ENCODE measurements at regions of chr1 and their contacts with region 1.

Region 1: GRCh38 chr1:226679853-226680516 is 59.1 kb downstream of the ITPKB start:
- DNase-seq: peak; percentile 89
- ATAC-seq: peak; percentile 20
- H3K4me3 Mint-ChIP-seq: peak overlapping the region; percentile 67
- H3K27ac Mint-ChIP-seq: peak overlapping the region; percentile 95
- H3K4me1 Mint-ChIP-seq: peaks cover 99% of the 10 kb centered on the region
- H3K27me3 Mint-ChIP-seq: no peaks in the 10 kb centered on the region

Region 2: GRCh38 chr1:226642876-226643576 is 37.0 kb before region 1 on chr1:
- CTCF ChIA-PET with region 1: interaction called, 6 read pairs
- POLR2A ChIA-PET with region 1: no interaction called
- intact Hi-C with region 1: loop called in 1 of 2 experiments (anchors 5 kb)
- DNase-seq: peak; percentile 88
- ATAC-seq: peak; percentile 94
- H3K4me3 Mint-ChIP-seq: peak overlapping the region; percentile 50
- H3K27ac Mint-ChIP-seq: peak overlapping the region; percentile 86
- H3K4me1 Mint-ChIP-seq: peaks cover 51% of the 10 kb centered on the region
- H3K27me3 Mint-ChIP-seq: no peaks in the 10 kb centered on the region

Region 3: GRCh38 chr1:226649780-226650179 is 30.2 kb before region 1 on chr1:
- CTCF ChIA-PET with region 1: interaction called, 5 read pairs
- POLR2A ChIA-PET with region 1: interaction called, 10 read pairs
- intact Hi-C with region 1: loop called (anchors 5 kb)
- DNase-seq: peak; percentile 67
- ATAC-seq: no peak
- H3K4me3 Mint-ChIP-seq: no peak overlapping the region
- H3K27ac Mint-ChIP-seq: peak overlapping the region; percentile 52
- H3K4me1 Mint-ChIP-seq: peaks cover 48% of the 10 kb centered on the region
- H3K27me3 Mint-ChIP-seq: no peaks in the 10 kb centered on the region

Region 4: GRCh38 chr1:226697151-226697939 is 17.4 kb after region 1 on chr1:
- CTCF ChIA-PET with region 1: interaction called, 14 read pairs
- POLR2A ChIA-PET with region 1: interaction called, 7 read pairs
- intact Hi-C with region 1: no loop called
- DNase-seq: no peak
- ATAC-seq: peak; percentile 77
- H3K4me3 Mint-ChIP-seq: no peak overlapping the region
- H3K27ac Mint-ChIP-seq: peak overlapping the region; percentile 97
- H3K4me1 Mint-ChIP-seq: peaks cover 90% of the 10 kb centered on the region
- H3K27me3 Mint-ChIP-seq: no peaks in the 10 kb centered on the region

Region 5: DNA sequence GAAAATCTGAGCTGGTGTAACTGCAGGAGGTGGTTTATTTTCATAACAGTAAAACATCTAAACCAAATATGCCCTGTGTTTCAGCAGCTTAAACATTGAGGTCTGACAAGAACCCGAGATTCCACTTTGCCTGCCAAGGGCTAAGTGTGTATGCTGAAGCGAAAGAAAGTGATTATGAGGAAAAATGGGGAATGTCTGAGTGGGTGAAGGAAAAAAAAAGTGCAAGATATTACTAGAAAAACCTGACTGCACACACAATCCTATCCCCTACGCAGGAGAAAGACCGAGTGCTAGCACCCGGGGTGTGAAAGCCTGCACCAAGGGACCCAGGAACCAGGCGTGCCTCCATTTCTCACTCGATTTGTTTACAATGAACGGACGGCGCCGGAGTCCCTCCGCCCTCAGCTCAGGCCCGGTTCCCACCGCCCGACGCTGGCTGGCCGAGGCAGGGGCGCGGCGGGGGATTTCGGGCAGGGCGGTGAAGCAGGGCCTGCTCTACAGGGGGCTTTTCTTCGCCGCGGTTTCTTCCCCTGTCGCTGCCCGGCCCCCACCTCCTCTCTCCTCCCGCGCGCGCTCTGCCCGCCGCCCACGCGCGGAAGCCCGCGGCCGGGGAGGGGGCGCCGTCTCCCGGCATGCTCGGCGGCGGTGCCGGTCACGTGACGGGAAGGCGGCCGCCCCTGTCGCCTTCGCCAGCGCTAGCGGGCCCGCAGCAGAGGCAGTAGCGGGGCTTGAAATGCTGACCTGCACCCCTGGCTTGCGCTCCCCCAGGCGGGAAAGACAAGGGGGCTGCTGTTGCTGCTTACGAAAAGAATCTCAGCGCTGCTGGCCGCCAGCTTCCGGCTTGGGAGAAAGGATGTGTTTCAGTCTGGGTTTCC is 23.2 kb after region 1 on chr1:
- CTCF ChIA-PET with region 1: interaction called, 14 read pairs
- POLR2A ChIA-PET with region 1: interaction called, 7 read pairs
- intact Hi-C with region 1: loop called in 1 of 2 experiments (anchors 1 kb)
- DNase-seq: peak; percentile 90
- ATAC-seq: peak; percentile 61
- H3K4me3 Mint-ChIP-seq: peak overlapping the region; percentile 84
- H3K27ac Mint-ChIP-seq: peak overlapping the region; percentile 97
- H3K4me1 Mint-ChIP-seq: peaks cover 85% of the 10 kb centered on the region
- H3K27me3 Mint-ChIP-seq: no peaks in the 10 kb centered on the region

Region 6: GRCh38 chr1:226882631-226883409 is 202.8 kb after region 1 on chr1:
- CTCF ChIA-PET with region 1: no interaction called
- POLR2A ChIA-PET with region 1: no interaction called
- intact Hi-C with region 1: loop called in 1 of 2 experiments (anchors 1 kb)
- DNase-seq: peak; percentile 54
- ATAC-seq: peak; percentile 92
- H3K4me3 Mint-ChIP-seq: peak overlapping the region; percentile 64
- H3K27ac Mint-ChIP-seq: peak overlapping the region; percentile 91
- H3K4me1 Mint-ChIP-seq: peaks cover 53% of the 10 kb centered on the region
- H3K27me3 Mint-ChIP-seq: no peaks in the 10 kb centered on the region

Measured in activated CD4-positive, alpha-beta T cell treated with anti-CD3 and anti-CD28 coated beads for 36 hours (primary cell).